ENCODE measurements at regions of chr1 and their contacts with region 1.

Region 1: DNA sequence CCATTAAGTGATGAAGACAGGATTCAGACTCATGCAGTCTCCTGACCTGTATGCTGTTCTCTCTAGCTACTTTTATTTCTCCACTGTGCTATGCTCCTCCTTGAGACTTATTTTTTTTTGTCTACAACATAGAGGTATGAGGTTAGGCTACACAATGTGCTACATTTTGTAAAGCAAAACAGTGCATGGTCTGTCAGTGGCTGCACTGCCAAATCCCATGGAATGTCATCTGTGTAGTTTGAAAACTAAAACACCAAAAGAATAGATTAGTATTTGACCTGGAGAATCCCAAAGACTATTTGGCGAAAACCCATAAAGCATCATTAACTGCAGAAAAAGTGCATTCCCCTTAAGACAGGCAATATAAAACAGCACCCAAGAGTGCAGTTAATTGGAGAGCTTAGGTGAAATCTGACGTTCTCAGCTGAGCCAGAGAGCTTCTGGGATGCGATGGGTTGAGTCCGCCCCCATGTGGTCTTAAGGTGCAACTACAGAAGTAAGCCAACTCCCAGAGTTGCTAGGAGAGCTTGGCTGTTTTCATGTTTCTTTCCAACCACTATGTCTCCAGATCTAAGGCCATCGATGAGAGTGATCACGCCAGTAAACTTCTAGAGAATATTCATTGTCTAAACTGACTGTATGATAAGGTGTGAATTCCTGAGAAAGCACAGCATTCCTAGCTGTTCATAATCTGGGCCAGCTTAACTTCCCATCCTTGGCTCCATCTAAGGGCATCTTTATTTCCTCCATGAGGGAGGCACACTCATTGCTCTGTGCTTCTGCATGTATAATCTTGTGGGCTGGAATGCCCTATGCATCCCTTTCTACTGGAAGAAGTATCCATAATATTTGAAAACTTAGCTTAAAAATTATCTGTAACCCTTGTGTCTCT is 20.7 kb upstream of the CYP2J2 start:
- DNase-seq: peak; percentile 45 to 81 (median 64)
- H3K4me3 ChIP-seq: no peak overlapping the region
- H3K27ac ChIP-seq: no peak overlapping the region
- H3K4me1 ChIP-seq: no peaks in the 10 kb centered on the region
- H3K27me3 ChIP-seq: no peaks in the 10 kb centered on the region
- CTCF ChIP-seq: peak; percentile 77 to 90 (median 86)
- POLR2A ChIP-seq: no peak

Region 2: GRCh38 chr1:59903141-59903754 is 44.0 kb before region 1 on chr1:
- intact Hi-C with region 1: loop called in 1 of 2 experiments (anchors 5 kb)
- DNase-seq: peak; percentile 27 to 68 (median 36)
- H3K4me3 ChIP-seq: no peak overlapping the region
- H3K27ac ChIP-seq: no peak overlapping the region
- H3K4me1 ChIP-seq: no peaks in the 10 kb centered on the region
- H3K27me3 ChIP-seq: no peaks in the 10 kb centered on the region
- CTCF ChIP-seq: peak; percentile 23 to 63 (median 58)
- POLR2A ChIP-seq: no peak

Region 3: DNA sequence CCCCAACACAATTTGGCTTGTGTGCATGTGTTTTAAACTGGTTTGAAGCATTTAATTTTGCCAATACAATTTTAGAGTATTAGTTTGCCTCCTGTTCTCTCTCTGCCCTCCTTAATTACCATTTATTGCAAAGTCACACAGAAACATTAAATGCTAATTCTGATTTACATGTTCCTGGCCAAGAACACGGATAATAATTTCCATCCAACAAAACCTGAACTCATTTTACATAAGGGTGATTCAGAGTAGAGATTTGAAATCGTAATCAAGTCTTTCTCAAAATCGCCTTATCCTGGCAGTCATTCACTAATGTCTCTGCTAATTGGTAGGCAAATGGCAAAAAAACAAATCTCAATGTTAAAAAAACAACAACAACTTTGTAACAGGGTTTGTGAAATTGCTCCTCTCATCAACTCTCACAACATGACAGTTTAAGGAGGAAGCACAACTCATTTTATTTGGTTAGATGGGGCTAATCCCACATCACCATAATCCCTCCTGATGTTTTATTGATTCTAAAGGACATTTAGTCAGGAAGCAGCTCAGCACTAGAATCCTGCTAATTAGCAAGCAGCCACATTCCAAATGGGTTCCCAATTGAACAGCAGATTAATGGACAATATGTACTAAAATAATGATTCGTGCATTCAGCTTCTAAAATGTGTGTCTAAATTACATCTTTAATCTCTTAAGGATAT is 70.4 kb after region 1 on chr1:
- intact Hi-C with region 1: no loop called
- DNase-seq: no peak
- H3K4me3 ChIP-seq: no peak overlapping the region
- H3K27ac ChIP-seq: no peak overlapping the region
- H3K4me1 ChIP-seq: no peaks in the 10 kb centered on the region
- H3K27me3 ChIP-seq: no peaks in the 10 kb centered on the region
- CTCF ChIP-seq: no peak
- POLR2A ChIP-seq: no peak